Left cardiac atrium (tissue), 4 donors: ENCODE measurements at regions of chr1 and their contacts with region 1.

Region 1: GRCh38 chr1:28208818-28209441 is 23.9 kb downstream of the DNAJC8 start:
- DNase-seq: peak; percentile 47
- ATAC-seq: peak; percentile 77 to 85

Region 2: DNA sequence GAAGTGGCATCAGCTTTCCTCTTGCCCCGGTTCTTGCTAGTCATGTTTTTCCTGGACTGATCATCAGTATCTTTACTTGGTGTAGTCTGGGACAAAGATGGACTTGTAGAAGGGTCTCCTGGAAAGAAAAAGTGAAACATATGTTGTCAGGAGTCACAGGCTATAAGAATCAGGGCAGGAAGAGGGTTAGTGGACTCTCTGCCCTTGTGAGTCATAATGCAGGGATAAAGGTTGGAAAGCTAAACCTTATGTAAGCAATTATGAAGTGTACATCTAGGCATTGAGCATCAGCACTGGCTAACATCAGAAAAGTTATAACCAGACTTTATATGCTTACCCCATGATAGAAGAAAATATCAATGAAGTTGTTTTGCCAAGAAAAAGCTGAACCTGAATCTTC is 198.0 kb before region 1 on chr1:
- intact Hi-C with region 1: no loop called
- DNase-seq: no peak
- ATAC-seq: no peak

Region 3: DNA sequence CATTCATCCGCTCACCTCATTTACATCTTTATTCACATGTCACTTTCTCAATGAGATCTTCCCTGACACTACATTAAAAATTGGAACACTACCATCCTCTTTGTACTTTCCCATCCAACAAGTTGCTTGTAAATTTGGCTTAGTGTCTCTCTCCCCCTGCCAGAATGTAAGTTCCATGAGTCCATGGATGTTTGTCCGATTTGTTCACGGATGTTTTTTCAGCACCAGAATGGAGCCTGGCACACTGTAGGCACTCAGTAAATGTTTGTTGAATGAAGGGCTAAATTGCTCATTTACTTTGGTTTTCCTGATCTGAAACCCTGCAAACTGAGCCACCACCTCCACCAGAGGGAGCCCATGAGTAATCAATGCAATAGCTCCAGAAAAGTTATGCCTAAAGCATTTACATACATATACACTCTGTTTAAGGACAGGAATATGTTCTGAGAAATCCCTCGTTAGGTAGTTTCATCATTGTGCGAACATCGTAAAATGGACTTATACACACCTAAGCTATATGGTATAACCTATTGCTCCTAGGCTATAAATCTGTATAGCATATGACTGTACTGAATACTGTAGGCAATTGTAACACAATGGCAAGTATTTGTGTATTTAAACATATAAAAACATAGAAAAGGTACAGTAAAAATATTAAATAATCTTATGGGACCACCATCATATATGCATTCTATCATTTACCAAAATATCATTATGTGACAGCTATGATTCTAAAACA is 117.7 kb before region 1 on chr1:
- intact Hi-C with region 1: loop called (anchors 2 to 10 kb)
- DNase-seq: peak; percentile 65
- ATAC-seq: no peak

Region 4: GRCh38 chr1:28266920-28267322 is 58.0 kb after region 1 on chr1:
- intact Hi-C with region 1: no loop called
- DNase-seq: no peak
- ATAC-seq: peak; percentile 55 to 60